MCF 10A (cell line): ENCODE measurements at regions of chr17 and their contacts with region 1.

Region 1: DNA sequence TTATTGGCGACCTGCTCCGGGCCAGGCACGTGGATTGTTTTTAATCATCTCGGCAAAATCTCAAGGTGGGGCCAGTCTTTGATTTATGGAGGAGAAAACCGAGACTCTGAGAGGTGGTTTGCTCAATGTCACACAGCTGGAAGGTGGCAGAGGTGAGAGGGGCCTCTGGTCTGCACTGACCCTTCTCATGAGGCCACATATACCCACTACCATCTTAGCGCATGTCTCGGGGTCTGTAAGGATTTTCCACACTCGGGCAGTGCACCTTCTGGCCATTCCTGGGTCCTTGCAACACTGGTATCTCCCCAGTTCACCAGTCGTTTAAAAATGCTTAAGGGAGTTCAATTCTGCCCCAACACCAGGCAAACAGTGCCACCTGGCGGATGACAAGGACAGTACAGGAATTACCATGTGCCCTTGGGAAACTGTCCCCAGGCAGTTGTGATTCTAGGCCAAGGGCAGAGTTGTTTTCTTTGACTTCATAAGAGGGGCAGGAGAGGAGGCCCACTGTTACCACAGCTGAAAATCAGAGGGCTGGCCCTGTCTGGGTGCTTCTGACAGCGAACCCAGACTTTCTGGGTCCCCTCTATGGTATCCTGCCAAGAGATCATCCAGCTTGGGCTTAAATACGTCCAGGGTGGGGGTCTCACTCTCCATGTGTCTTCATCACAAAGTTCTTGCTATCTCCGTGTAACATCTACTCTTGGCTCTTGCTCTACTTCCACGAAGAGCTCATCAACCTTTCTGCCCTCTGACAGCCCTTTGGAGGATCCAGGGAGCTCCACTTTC is 39.4 kb upstream of the RAI1 start:
- DNase-seq: peak; percentile 86
- H3K4me3 Mint-ChIP-seq: no peak overlapping the region
- H3K27ac Mint-ChIP-seq: no peak overlapping the region
- H3K4me1 Mint-ChIP-seq: no peaks in the 10 kb centered on the region
- H3K27me3 Mint-ChIP-seq: peaks cover 9% of the 10 kb centered on the region
- CTCF ChIP-seq: peak; percentile 76

Region 2: DNA sequence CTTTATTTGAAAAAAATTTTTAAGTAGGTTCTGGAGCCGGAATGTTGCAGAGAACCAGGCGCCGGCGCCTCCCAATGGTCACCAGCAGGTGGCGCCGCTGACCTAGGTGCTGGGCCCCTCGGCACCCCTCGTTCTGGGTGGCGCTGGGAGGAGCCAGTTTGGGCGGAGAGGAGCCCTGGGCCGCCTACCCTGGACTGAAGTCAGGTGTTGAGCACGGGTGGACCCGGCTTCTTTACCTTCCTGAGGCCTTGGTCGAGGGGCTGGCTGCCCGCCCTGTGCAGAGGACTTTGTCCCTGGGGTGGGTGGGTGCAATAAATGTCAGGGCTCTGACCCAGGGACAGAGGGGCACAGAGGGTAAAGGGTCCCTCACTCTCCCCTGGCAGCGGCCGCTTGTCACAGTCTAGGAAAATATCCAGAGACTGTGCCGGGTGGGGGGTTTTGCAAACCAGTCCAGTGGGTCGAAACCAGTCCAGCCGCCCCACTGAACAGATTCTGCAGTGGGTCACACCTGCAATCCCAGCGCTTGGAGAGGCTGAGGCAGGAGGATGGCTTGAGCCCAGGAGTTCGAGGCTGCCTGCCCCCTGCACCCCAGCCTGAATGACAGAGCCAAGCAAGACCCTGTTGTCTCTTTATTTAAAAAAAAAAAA is 639.8 kb before region 1 on chr17:
- CTCF ChIA-PET with region 1: no interaction called
- POLR2A ChIA-PET with region 1: no interaction called
- intact Hi-C with region 1: loop called (anchors 5 kb)
- DNase-seq: peak; percentile 80
- H3K4me3 Mint-ChIP-seq: no peak overlapping the region
- H3K27ac Mint-ChIP-seq: no peak overlapping the region
- H3K4me1 Mint-ChIP-seq: no peaks in the 10 kb centered on the region
- H3K27me3 Mint-ChIP-seq: no peaks in the 10 kb centered on the region
- CTCF ChIP-seq: peak; percentile 97

Region 3: DNA sequence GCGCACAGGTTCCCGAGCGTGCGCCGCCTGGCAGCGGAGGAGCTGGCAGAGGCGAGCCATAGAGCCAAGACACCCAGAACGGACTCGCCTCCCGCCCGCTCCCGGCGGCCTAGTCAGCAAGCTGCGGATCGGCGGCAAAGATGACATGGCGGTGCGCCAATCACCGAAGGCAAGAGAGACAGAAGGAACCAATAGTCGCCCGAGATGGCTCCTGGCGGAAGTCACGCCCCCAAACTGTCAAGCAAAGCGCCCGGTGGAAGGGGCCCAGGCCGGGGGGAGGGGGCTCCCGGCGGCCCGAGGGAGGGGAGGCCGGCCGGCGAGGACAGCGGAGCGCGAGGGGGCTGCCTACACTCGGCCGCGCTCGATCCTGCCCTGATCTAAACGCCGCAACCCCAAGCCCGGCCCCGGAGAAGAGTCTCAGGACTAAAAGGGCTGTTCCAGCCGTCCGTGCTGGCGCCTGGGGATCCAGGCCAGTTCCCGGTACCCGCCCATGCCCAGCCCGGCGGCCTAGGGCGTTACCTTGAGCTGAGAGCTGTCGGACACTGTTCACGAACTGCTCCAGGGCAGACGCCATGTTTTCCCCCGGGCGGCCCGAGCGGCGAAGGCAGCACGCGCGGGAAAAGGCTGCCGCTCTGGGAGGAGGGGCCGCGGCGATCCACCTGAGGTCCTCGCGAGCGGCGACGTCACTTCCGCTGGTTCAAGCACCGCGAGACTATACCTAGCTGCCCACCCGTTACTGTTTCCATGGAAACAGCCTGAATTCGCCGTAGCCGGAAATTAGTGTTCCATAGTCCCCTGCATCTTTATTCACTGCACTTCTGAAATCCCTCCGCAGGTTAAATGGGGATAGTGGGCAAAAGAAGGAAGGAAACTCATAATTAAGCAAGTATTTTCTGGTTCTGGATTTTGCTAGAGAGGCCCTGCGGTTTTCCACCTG is 360.9 kb before region 1 on chr17 and contains the start of gene COPS3:
- CTCF ChIA-PET with region 1: no interaction called
- POLR2A ChIA-PET with region 1: no interaction called
- intact Hi-C with region 1: no loop called
- DNase-seq: peak; percentile 98
- H3K4me3 Mint-ChIP-seq: peak within 1 kb of the TSS; percentile 94
- H3K27ac Mint-ChIP-seq: peak within 1 kb of the TSS; percentile 98
- H3K4me1 Mint-ChIP-seq: peaks cover 21% of the 10 kb centered on the region
- H3K27me3 Mint-ChIP-seq: no peaks in the 10 kb centered on the region
- CTCF ChIP-seq: no peak
- total RNA-seq, gene COPS3: 67.0 and 91.8 TPM in 2 replicates

Region 4: GRCh38 chr17:17344462-17345293 is 297.1 kb before region 1 on chr17:
- CTCF ChIA-PET with region 1: interaction called, 22 read pairs
- POLR2A ChIA-PET with region 1: no interaction called
- intact Hi-C with region 1: no loop called
- DNase-seq: no peak
- H3K4me3 Mint-ChIP-seq: no peak overlapping the region
- H3K27ac Mint-ChIP-seq: no peak overlapping the region
- H3K4me1 Mint-ChIP-seq: no peaks in the 10 kb centered on the region
- H3K27me3 Mint-ChIP-seq: no peaks in the 10 kb centered on the region
- CTCF ChIP-seq: no peak

Region 5: DNA sequence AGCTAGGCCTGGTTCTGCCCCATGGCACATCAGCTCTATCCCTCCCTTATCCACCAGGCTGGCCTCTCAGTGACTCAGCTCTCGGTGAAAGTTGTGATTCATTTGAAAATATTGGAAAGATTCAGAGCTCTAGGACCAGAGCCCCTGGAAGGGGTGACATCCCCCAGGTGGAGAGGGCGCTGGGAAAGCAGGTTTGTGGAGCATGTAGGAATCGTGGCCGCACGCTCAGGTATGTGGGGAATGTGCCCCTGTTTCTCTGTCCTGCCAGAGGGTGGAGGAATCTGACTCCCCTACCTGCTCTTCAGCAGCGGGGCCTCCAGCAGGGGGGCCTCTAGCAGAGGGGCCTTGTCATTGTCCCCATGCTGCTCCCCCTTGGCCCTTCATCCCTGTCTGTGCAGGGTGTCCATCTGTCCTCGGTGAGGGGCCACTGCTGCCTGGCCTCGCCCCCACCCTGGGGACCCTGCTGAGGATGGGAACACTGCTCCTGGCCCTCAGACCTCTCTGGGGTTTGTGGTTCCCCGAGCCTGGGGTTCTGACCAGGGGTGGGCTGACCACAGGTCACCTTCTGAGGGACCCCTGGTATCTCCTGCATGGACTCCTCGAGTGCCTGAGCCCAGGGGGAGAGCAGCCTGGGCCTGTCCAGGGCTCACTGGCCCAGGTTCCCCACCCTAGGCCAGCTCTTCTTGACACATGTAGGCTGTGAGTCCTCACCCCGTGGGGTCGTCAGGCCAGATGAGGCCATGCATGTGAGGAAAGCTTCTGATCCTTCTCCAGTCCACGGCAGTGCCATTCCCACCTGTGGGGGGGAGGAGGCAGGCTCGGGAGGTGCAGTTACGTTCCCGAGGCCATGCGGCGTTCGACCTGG is 291.1 kb before region 1 on chr17:
- CTCF ChIA-PET with region 1: interaction called, 82 read pairs
- POLR2A ChIA-PET with region 1: no interaction called
- intact Hi-C with region 1: no loop called
- DNase-seq: no peak
- H3K4me3 Mint-ChIP-seq: no peak overlapping the region
- H3K27ac Mint-ChIP-seq: no peak overlapping the region
- H3K4me1 Mint-ChIP-seq: no peaks in the 10 kb centered on the region
- H3K27me3 Mint-ChIP-seq: peaks cover 8% of the 10 kb centered on the region
- CTCF ChIP-seq: no peak

Region 6: DNA sequence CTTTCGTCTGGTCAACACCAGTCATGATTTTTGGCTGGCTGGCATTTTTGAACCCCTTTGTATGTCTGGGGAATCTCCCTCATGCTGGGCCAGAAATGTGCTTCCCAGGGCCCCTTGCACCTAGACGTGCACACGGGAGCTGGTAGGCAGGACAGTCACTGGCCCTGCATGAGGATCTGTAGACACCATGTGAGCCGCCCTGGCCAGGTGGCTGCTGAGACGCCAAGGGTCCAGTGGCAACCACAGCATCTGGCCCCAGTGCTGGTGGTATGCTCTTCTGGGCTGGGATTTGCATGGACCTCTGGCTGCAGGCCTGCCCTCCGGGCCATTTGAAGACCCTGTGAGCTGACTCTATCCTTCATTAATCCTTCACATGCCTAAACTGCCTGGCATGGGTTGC is 271.1 kb before region 1 on chr17:
- CTCF ChIA-PET with region 1: interaction called, 10 read pairs
- POLR2A ChIA-PET with region 1: no interaction called
- intact Hi-C with region 1: no loop called
- DNase-seq: no peak
- H3K4me3 Mint-ChIP-seq: no peak overlapping the region
- H3K27ac Mint-ChIP-seq: no peak overlapping the region
- H3K4me1 Mint-ChIP-seq: no peaks in the 10 kb centered on the region
- H3K27me3 Mint-ChIP-seq: peaks cover 70% of the 10 kb centered on the region
- CTCF ChIP-seq: no peak

Region 7: DNA sequence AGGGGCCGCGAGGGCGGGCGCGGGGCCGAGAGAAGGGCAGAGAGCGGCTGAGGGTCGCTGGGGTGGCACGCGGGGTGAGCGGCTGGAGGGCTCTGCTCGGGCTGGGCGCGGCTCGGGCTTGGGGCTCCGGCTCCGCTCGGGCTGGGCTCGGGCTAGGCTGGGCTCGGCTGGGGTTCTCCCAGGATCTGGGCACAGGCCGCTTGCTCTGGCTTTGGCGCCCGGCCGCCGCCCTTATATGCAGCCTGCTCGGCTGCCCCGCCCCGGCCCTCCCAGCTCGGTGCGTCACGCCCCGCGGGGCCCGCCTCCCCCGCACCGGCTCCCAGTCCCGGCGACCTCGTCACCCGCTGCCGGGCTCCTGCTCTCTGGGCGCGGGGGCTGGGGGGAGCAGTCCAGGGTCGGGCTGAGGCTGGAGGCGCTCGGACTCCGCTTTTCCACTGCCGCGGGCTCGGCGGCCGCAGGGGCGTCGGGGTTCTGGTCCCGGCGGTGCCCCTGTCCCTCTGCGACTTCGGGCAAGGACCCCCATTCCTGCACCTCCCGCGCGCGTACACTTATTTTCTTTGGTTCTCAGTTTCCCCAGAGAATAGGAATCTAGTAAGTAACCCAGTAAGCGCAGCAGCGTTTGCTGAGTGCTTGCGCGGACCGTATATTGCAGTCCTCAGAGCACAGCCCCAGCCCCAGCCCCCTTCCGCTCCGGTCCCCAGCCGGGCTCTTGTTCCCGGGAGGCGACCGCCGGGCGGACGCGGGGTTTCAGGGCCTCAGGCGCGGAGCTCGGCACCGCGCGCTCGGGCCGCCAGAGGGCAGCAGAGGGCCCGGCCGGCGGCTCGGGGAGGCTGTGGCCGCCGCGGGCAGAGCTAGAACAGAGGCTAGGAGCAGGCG is 145.4 kb before region 1 on chr17 and contains the start of gene RASD1:
- CTCF ChIA-PET with region 1: interaction called, 42 read pairs
- POLR2A ChIA-PET with region 1: interaction called, 11 read pairs
- intact Hi-C with region 1: loop called (anchors 1 kb)
- DNase-seq: peak; percentile 69
- H3K4me3 Mint-ChIP-seq: peak within 1 kb of the TSS; percentile 57
- H3K27ac Mint-ChIP-seq: no peak within 1 kb of the TSS
- H3K4me1 Mint-ChIP-seq: no peaks in the 10 kb centered on the region
- H3K27me3 Mint-ChIP-seq: no peaks in the 10 kb centered on the region
- CTCF ChIP-seq: peak; percentile 88
- total RNA-seq, gene RASD1: 0.21 TPM in 1 of 2 replicates, not detected in the other

Region 8: DNA sequence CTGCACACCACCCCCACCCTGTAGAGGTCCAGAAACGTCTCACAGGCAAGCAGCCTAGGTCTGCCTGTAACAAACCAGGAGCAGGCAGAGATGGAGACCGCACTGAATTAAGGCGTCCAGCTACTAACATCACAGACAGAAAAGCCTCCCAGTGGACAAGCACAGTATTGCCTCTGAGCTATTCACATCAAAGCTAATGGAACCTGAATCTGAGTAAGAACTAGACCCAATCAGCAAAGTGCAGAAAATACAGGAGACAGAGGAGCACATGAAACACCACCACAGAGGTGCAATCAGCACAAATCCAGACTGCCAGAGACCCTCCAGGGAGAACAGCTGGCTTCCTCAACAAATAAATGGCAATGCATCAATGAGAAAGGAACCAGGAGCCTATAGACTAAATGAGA is 28.1 kb before region 1 on chr17:
- CTCF ChIA-PET with region 1: interaction called, 32 read pairs
- POLR2A ChIA-PET with region 1: no interaction called
- intact Hi-C with region 1: no loop called
- DNase-seq: peak; percentile 69
- H3K4me3 Mint-ChIP-seq: no peak overlapping the region
- H3K27ac Mint-ChIP-seq: no peak overlapping the region
- H3K4me1 Mint-ChIP-seq: no peaks in the 10 kb centered on the region
- H3K27me3 Mint-ChIP-seq: no peaks in the 10 kb centered on the region
- CTCF ChIP-seq: peak; percentile 44